HCT116 (cell line): ENCODE measurements at regions of chr9 and their contacts with region 1.

Region 1: GRCh38 chr9:5479994-5480694 is 29.8 kb downstream of the CD274 start:
- DNase-seq: no peak
- ATAC-seq: no peak
- H3K4me3 ChIP-seq: no peak overlapping the region
- H3K27ac ChIP-seq: no peak overlapping the region
- H3K4me1 ChIP-seq: no peaks in the 10 kb centered on the region
- H3K27me3 ChIP-seq: no peaks in the 10 kb centered on the region
- CTCF ChIP-seq: no peak
- POLR2A ChIP-seq: no peak
- RAD21 ChIP-seq: no peak

Region 2: GRCh38 chr9:5042641-5043277 is 437.4 kb before region 1 on chr9:
- CTCF ChIA-PET with region 1: no interaction called
- POLR2A ChIA-PET with region 1: no interaction called
- RAD21 ChIA-PET with region 1: no interaction called
- intact Hi-C with region 1: no loop called
- DNase-seq: no peak
- ATAC-seq: no peak
- H3K4me3 ChIP-seq: no peak overlapping the region
- H3K27ac ChIP-seq: no peak overlapping the region
- H3K4me1 ChIP-seq: no peaks in the 10 kb centered on the region
- H3K27me3 ChIP-seq: no peaks in the 10 kb centered on the region
- CTCF ChIP-seq: no peak
- POLR2A ChIP-seq: no peak
- RAD21 ChIP-seq: no peak

Region 3: DNA sequence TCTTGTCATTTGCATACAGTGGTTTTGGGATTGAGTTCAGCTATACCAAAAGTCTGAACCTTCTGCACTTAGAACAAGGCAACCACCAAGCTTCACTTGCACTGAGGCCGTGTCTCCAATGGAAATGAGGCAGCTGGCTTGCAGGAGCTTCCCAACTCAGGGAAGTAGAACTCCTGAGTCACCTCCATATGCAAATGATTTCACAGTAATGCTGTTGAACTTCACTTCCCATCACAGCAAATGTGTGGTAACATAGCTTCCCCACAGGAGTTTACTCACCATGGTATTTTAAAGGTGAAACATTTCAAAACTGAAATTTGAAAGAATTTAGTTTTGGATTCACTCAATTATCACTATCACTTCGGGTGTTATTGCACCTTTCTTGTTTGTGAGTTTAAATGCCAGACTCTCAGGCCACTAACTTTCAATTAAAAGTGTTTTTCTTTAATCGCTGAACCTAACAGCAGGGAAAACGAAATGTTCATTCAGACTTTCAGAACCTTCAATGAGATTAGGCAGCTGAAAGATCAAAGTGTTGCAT is 20.8 kb before region 1 on chr9:
- CTCF ChIA-PET with region 1: no interaction called
- POLR2A ChIA-PET with region 1: no interaction called
- RAD21 ChIA-PET with region 1: no interaction called
- intact Hi-C with region 1: no loop called
- DNase-seq: no peak
- ATAC-seq: no peak
- H3K4me3 ChIP-seq: no peak overlapping the region
- H3K27ac ChIP-seq: no peak overlapping the region
- H3K4me1 ChIP-seq: peaks cover 0 to 11% of the 10 kb centered on the region in 2 experiments; a peak in 2 of 4 replicates
- H3K27me3 ChIP-seq: no peaks in the 10 kb centered on the region
- CTCF ChIP-seq: no peak
- POLR2A ChIP-seq: no peak
- RAD21 ChIP-seq: no peak

Region 4: GRCh38 chr9:5493679-5494511 is 13.8 kb after region 1 on chr9:
- CTCF ChIA-PET with region 1: no interaction called
- POLR2A ChIA-PET with region 1: no interaction called
- RAD21 ChIA-PET with region 1: no interaction called
- intact Hi-C with region 1: loop called (anchors 2 kb)
- DNase-seq: no peak
- ATAC-seq: no peak
- H3K4me3 ChIP-seq: no peak overlapping the region
- H3K27ac ChIP-seq: no peak overlapping the region
- H3K4me1 ChIP-seq: peaks cover 0 to 13% of the 10 kb centered on the region in 2 experiments; a peak in 1 of 4 replicates
- H3K27me3 ChIP-seq: no peaks in the 10 kb centered on the region
- CTCF ChIP-seq: no peak
- POLR2A ChIP-seq: no peak
- RAD21 ChIP-seq: no peak